Activated CD4-positive, alpha-beta T cell treated with anti-CD3 and anti-CD28 coated beads, Interleukin-2, amount 10 ng/mL, durations not matched to agents 7 days and 5 days (primary cell): ENCODE measurements at regions of chr5 and their contacts with region 1.

Region 1: DNA sequence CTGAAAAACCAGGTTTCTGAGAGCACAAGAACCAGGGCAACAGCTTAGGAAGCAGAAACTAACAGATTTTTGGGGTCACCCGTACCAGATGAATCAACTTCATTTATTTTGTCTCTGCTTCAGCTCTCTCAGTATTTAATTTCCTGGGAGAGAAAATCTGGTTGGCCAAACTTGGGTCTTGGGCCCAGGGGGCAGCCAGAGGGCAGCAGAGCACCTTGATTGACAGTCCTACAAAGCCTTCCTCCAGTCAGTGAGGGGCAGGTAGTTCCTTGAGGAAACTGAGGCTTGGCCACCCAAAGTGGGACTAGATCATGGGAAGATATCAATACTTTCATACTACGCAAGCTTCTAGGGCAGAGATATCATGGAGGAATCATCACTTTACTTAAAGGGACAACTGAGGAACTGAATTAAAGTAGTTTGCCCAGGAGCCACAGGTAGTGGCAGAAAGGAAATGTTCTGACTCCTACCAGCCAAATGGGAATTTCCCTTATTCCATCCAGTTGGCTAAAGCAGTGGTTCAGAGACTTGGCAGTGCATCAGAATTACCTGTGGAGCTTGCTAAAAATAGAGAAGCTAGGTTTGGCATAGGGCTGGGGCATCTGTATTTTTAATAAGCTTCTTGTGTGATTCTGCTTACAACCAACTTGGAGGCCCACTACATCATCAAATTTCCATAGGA is 21.5 kb upstream of the ARHGAP26 start:
- DNase-seq: peak; percentile 58
- H3K4me3 Mint-ChIP-seq: no peak overlapping the region
- H3K27ac Mint-ChIP-seq: no peak overlapping the region
- H3K4me1 Mint-ChIP-seq: peaks cover 12% of the 10 kb centered on the region
- H3K27me3 Mint-ChIP-seq: peaks cover 4% of the 10 kb centered on the region

Region 2: GRCh38 chr5:142872795-142873194 is 124.1 kb after region 1 on chr5:
- CTCF ChIA-PET with region 1: interaction called, 26 read pairs
- POLR2A ChIA-PET with region 1: no interaction called
- DNase-seq: no peak
- H3K4me3 Mint-ChIP-seq: no peak overlapping the region
- H3K27ac Mint-ChIP-seq: no peak overlapping the region
- H3K4me1 Mint-ChIP-seq: no peaks in the 10 kb centered on the region
- H3K27me3 Mint-ChIP-seq: no peaks in the 10 kb centered on the region

Region 3: DNA sequence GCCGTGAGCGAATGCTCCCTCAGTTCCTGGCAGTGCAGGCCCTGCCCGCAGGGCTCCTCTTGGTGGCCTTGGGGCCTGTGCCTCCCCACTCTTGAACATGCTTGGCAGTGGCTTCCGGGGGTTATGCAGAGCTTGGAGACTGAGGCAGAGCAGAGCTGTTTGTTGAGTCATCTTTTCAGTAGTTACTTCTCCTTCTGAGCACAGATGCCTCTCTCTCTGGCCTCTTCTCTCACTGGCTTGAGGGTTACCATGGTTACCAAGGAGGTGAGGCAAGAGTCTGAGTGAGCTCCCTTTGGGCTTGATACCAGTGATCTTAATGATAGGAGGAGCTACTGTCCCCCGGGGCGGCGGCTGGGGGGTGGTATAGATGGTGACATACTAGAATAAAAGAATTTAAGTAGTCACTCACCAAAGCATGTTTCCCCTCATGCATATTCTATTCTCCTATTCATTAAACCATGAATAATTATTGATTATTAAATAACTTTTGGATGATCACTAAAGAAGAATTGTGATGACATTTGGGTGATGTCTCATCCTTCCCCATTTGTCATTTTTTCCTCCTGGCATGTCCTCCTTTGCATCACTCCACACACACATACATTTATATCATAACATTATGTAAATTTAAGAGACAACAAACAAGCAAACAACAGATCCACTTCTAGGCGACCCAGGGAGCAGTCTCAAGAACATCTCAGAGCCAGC is 132.5 kb after region 1 on chr5:
- CTCF ChIA-PET with region 1: interaction called, 43 read pairs
- POLR2A ChIA-PET with region 1: no interaction called
- DNase-seq: no peak
- H3K4me3 Mint-ChIP-seq: no peak overlapping the region
- H3K27ac Mint-ChIP-seq: no peak overlapping the region
- H3K4me1 Mint-ChIP-seq: peaks cover 5% of the 10 kb centered on the region
- H3K27me3 Mint-ChIP-seq: no peaks in the 10 kb centered on the region

Region 4: GRCh38 chr5:142888469-142889085 is 139.9 kb after region 1 on chr5:
- CTCF ChIA-PET with region 1: interaction called, 43 read pairs
- POLR2A ChIA-PET with region 1: no interaction called
- DNase-seq: peak; percentile 27
- H3K4me3 Mint-ChIP-seq: no peak overlapping the region
- H3K27ac Mint-ChIP-seq: no peak overlapping the region
- H3K4me1 Mint-ChIP-seq: peaks cover 3% of the 10 kb centered on the region
- H3K27me3 Mint-ChIP-seq: no peaks in the 10 kb centered on the region